Sigmoid colon (tissue), 7 donors: ENCODE measurements at regions of chr15 and their contacts with region 1.

Region 1: GRCh38 chr15:101501703-101502373 is 12.3 kb upstream of the PCSK6 start:
- DNase-seq: no peak
- H3K4me3 ChIP-seq: no peak overlapping the region
- H3K27ac ChIP-seq: peak overlapping the region in 2 of 4 donors; percentile 37 to 41
- H3K4me1 ChIP-seq: peaks cover 0 to 32% (median 22%) of the 10 kb centered on the region in 4 donors
- H3K27me3 ChIP-seq: peaks cover 0 to 11% (median 0%) of the 10 kb centered on the region in 3 donors
- CTCF ChIP-seq: peak; percentile 19 to 33 (median 32)
- EP300 ChIP-seq: no peak
- POLR2A ChIP-seq: no peak

Region 2: DNA sequence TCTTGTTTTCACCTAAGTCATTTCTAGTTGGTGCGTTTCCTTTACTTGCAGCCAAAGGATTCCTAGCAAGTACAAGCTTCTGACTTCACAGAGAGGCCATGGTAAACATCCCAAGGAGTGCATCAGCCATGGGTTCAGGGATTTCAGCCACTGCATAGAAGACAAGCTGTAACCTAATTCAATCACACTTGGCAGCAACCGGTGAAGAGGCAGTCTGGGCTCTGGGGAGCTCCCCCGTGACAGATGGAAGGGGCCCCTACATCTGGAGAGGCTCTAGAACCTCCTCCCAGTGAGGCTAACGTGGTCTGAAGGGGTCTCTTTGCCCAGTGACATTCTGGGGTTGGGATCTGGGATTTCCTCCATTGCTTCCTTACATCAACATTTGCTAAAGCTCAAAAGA is 198.4 kb before region 1 on chr15:
- intact Hi-C with region 1: loop called (anchors 5 kb)
- DNase-seq: no peak
- H3K4me3 ChIP-seq: no peak overlapping the region
- H3K27ac ChIP-seq: no peak overlapping the region
- H3K4me1 ChIP-seq: no peaks in the 10 kb centered on the region
- H3K27me3 ChIP-seq: peaks cover 0 to 3% (median 0%) of the 10 kb centered on the region in 3 donors
- CTCF ChIP-seq: no peak
- EP300 ChIP-seq: no peak
- POLR2A ChIP-seq: no peak